Activated CD4-positive, alpha-beta memory T cell treated with anti-CD3 and anti-CD28 coated beads for 36 hours (primary cell): ENCODE measurements at regions of chr17 and their contacts with region 1.

Region 1: GRCh38 chr17:80892019-80892855 is 99.4 kb upstream of the CHMP6 start:
- DNase-seq: peak; percentile 97
- H3K4me3 Mint-ChIP-seq: peak overlapping the region; percentile 89
- H3K27ac Mint-ChIP-seq: peak overlapping the region; percentile 96
- H3K4me1 Mint-ChIP-seq: peaks cover 71% of the 10 kb centered on the region
- H3K27me3 Mint-ChIP-seq: no peaks in the 10 kb centered on the region

Region 2: GRCh38 chr17:80454557-80455335 is 437.5 kb before region 1 on chr17:
- CTCF ChIA-PET with region 1: no interaction called
- POLR2A ChIA-PET with region 1: interaction called, 3 read pairs
- intact Hi-C with region 1: loop called (anchors 10 kb)
- DNase-seq: peak; percentile 97
- H3K4me3 Mint-ChIP-seq: peak overlapping the region; percentile 96
- H3K27ac Mint-ChIP-seq: peak overlapping the region; percentile 92
- H3K4me1 Mint-ChIP-seq: peaks cover 16% of the 10 kb centered on the region
- H3K27me3 Mint-ChIP-seq: peaks cover 17% of the 10 kb centered on the region

Region 3: GRCh38 chr17:80544655-80545498 is 347.4 kb before region 1 on chr17 and contains the start of gene RPTOR:
- CTCF ChIA-PET with region 1: no interaction called
- POLR2A ChIA-PET with region 1: no interaction called
- intact Hi-C with region 1: no loop called
- DNase-seq: peak; percentile 95
- H3K4me3 Mint-ChIP-seq: peak within 1 kb of the TSS; percentile 96
- H3K27ac Mint-ChIP-seq: peak within 1 kb of the TSS; percentile 88
- H3K4me1 Mint-ChIP-seq: peaks cover 28% of the 10 kb centered on the region
- H3K27me3 Mint-ChIP-seq: peaks cover 12% of the 10 kb centered on the region
- total RNA-seq, gene RPTOR: 41.5 to 47.9 TPM

Region 4: DNA sequence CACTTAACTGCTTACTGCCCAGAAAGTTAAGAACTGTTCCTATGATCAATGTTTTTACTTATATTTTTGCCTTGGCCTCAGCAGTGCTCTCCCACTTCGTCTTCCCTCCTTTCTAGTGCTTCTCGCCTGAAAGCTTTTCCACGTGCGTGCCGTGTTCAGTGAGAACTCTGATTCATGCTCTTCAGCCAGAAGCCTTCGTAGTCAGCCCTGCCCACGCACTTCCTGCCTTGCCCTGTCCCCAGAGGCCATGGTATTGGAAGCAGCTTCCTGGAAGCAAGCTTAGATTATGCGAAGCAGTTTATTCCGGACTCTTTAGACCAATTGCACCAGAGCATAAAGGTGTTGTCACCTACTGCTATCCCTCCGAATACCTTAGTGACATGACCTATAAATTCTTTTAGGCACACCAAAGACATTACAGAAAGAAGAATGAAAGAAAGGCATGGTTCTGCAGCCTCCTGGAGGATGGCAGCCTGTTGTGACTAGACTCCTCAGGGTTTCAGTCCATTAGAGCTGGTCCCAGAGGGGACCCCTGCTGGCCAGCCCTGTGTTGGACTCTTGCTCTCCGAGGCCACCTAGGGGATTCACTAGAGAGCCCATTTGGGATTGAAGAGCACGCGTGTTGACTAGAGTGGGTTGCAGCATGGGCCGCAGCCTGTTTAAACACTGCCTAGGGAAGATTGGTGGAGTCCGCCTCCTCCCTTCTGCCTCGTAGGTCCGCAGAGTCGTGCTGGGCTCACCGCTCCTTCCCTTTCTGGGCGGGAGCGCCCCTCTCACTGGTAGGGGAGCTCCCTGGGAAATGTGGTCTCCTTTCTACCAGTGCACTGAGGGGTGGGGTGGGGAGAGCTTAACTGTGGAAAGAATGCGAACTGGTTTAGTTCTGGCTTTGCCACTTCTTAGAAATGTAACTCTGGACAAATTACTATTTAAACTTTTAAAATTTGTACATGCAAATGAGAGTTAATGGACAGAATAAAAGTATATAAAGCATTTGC is 242.3 kb before region 1 on chr17:
- CTCF ChIA-PET with region 1: no interaction called
- POLR2A ChIA-PET with region 1: interaction called, 3 read pairs
- intact Hi-C with region 1: loop called (anchors 5 kb)
- DNase-seq: peak; percentile 91
- H3K4me3 Mint-ChIP-seq: no peak overlapping the region
- H3K27ac Mint-ChIP-seq: peak overlapping the region; percentile 69
- H3K4me1 Mint-ChIP-seq: peaks cover 70% of the 10 kb centered on the region
- H3K27me3 Mint-ChIP-seq: no peaks in the 10 kb centered on the region

Region 5: DNA sequence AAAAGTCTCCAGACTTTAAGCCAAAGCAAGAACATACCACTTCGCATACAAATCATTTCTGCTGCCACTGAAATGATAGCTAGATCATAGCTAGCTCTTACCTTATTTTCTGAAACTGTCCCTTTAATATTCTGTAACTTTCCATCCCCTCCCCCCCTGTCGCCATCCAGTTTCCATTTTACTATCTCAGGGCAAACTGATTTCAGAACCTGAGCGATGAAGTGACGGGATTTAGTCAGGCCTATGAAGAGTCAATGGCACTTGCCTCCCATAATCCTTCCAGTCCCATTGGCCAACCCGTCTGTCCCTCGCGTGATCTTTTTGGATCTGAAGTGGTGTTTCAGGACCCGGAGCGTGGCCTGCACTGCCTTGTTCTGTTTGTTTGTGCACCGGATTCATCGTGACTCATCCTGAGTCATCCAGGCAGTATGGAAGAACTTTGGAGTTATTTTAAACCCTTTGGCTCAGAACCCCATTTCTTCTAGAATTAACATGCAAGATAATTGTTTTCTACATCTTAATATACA is 100.4 kb before region 1 on chr17:
- CTCF ChIA-PET with region 1: interaction called, 5 read pairs
- POLR2A ChIA-PET with region 1: interaction called, 10 read pairs
- intact Hi-C with region 1: loop called (anchors 1 kb)
- DNase-seq: peak; percentile 86
- H3K4me3 Mint-ChIP-seq: peak overlapping the region; percentile 45
- H3K27ac Mint-ChIP-seq: peak overlapping the region; percentile 95
- H3K4me1 Mint-ChIP-seq: peaks cover 89% of the 10 kb centered on the region
- H3K27me3 Mint-ChIP-seq: no peaks in the 10 kb centered on the region

Region 6: GRCh38 chr17:80855948-80856862 is 36.0 kb before region 1 on chr17:
- CTCF ChIA-PET with region 1: interaction called, 13 read pairs
- POLR2A ChIA-PET with region 1: interaction called, 23 read pairs
- intact Hi-C with region 1: loop called (anchors 1 kb)
- DNase-seq: peak; percentile 96
- H3K4me3 Mint-ChIP-seq: peak overlapping the region; percentile 24
- H3K27ac Mint-ChIP-seq: peak overlapping the region; percentile 94
- H3K4me1 Mint-ChIP-seq: peaks cover 59% of the 10 kb centered on the region
- H3K27me3 Mint-ChIP-seq: no peaks in the 10 kb centered on the region

Region 7: GRCh38 chr17:80876950-80877728 is 15.1 kb before region 1 on chr17:
- CTCF ChIA-PET with region 1: interaction called, 11 read pairs
- POLR2A ChIA-PET with region 1: interaction called, 44 read pairs
- intact Hi-C with region 1: loop called (anchors 1 kb)
- DNase-seq: peak; percentile 89
- H3K4me3 Mint-ChIP-seq: peak overlapping the region; percentile 70
- H3K27ac Mint-ChIP-seq: peak overlapping the region; percentile 98
- H3K4me1 Mint-ChIP-seq: peaks cover 49% of the 10 kb centered on the region
- H3K27me3 Mint-ChIP-seq: no peaks in the 10 kb centered on the region

Region 8: GRCh38 chr17:80908776-80909175 is 16.5 kb after region 1 on chr17:
- CTCF ChIA-PET with region 1: no interaction called
- POLR2A ChIA-PET with region 1: no interaction called
- intact Hi-C with region 1: no loop called
- DNase-seq: no peak
- H3K4me3 Mint-ChIP-seq: no peak overlapping the region
- H3K27ac Mint-ChIP-seq: no peak overlapping the region
- H3K4me1 Mint-ChIP-seq: no peaks in the 10 kb centered on the region
- H3K27me3 Mint-ChIP-seq: no peaks in the 10 kb centered on the region

Region 9: DNA sequence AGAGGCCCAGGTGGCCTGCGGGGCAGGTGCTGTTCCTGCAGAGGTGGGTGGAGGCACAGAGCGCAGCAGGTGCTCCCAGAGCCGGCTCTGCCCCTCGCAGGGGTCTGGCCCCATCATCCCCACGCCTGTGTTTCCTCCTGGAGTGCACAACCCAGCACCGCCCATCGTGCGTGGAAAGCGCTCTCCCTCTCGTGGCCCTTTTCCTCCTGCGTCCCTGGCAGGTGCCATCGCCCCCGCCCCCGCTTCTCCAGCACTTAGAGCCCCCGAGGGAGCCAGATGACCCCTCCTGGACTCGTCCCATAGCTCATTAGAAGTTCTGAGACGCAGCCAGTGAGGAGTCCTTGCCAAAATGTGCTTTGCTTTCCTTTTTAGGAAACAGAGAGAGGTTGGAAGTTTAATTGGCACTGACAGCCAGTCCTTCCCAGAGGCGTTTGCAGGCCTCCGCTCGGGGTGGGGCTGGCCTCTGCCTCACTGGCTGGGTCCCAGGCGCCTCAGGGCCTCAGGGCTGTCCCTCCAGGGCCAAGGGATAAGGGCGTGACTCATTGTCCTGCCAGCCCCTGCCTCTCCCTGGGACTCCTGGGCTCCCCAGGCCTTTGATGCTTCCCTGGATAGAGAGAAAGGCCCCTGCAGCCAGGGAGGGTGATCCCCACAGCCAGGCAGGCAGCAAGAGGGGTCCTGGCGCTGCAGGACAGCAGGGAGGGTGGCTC is 67.2 kb after region 1 on chr17:
- CTCF ChIA-PET with region 1: no interaction called
- POLR2A ChIA-PET with region 1: no interaction called
- intact Hi-C with region 1: no loop called
- DNase-seq: no peak
- H3K4me3 Mint-ChIP-seq: no peak overlapping the region
- H3K27ac Mint-ChIP-seq: no peak overlapping the region
- H3K4me1 Mint-ChIP-seq: no peaks in the 10 kb centered on the region
- H3K27me3 Mint-ChIP-seq: no peaks in the 10 kb centered on the region